Heart left ventricle (tissue), 16 donors: ENCODE measurements at regions of chr7 and their contacts with region 1.

Region 1: GRCh38 chr7:143126140-143126539 is 5.7 kb upstream of the PIP start:
- DNase-seq: no peak
- ATAC-seq: peak in 2 of 4 donors; percentile 22 to 39
- H3K4me3 ChIP-seq: no peak overlapping the region
- H3K27ac ChIP-seq: no peak overlapping the region
- H3K4me1 ChIP-seq: peaks cover 0 to 14% (median 0%) of the 10 kb centered on the region in 12 donors
- H3K27me3 ChIP-seq: no peaks in the 10 kb centered on the region
- CTCF ChIP-seq: no peak
- POLR2A ChIP-seq: no peak

Region 2: DNA sequence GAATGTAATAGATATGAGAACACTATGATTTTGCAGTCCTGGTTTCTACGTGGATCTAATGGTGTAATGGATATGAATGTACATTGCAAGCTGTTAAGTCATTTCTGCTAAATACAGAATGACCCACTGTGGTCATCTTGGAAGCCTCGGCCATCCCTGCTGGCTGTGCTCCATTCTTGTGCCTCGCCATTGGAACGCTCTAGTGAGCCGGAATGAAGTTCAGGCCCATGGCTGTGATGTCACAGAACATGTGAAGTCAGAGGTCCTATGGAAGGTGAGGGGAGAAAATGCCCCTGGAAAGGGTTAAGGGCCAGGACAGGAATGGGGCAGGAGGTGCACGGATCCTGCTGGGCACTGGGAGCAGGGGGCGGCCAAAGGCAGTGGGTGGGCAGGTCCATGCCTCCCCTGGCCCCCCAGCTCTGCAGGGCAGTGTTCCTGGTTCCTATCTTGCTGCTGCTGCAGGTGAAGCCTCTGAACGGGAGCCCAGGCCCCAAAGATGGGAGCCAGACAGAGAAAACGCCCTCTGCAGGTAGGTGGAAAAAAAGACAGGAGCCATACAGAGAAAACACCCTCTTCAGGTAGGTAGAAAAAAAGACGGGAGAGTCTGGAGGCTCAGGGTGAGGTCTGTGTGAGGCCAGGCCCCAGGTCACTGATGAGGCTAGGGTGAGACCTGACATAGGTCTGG is 186.8 kb before region 1 on chr7 and contains the start of gene LLCFC1:
- intact Hi-C with region 1: no loop called
- DNase-seq: no peak
- ATAC-seq: no peak
- H3K4me3 ChIP-seq: no peak within 1 kb of the TSS
- H3K27ac ChIP-seq: no peak within 1 kb of the TSS
- H3K4me1 ChIP-seq: peaks cover 0 to 7% (median 0%) of the 10 kb centered on the region in 12 donors
- H3K27me3 ChIP-seq: no peaks in the 10 kb centered on the region
- CTCF ChIP-seq: no peak
- POLR2A ChIP-seq: no peak
- total RNA-seq, gene LLCFC1: not detected

Region 3: DNA sequence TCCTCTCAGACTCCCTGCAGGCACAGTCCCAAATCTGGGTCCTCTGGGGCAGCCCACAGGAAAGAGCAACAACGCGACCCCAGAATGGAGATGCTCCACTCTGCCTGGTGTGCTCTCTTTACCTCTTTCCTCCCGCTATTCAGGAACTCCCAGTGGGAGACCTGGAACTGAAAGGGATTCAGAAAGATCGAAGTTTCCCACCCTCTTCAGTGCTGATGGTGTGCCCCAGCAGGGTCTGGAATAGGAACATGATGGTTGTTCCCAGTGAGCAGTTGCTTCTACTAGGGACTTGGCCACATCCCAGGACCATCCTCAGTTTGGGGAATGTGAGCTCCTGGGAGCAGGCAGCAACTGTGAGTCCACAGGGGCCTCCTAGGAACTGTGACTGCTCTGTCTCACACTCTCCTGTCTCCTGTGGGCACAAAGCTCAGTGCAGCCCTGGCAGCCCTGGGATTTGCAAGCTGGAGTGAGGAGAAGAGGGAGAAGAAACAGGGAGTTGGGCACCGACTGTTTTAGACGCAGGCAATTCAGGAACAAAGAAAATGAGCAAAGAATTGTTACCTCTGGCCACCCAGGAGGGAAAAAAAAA is 56.1 kb before region 1 on chr7:
- intact Hi-C with region 1: loop called in 1 of 10 experiments (anchors 10 kb)
- DNase-seq: no peak
- ATAC-seq: peak in 1 of 4 donors; percentile 28
- H3K4me3 ChIP-seq: no peak overlapping the region
- H3K27ac ChIP-seq: no peak overlapping the region
- H3K4me1 ChIP-seq: no peaks in the 10 kb centered on the region
- H3K27me3 ChIP-seq: no peaks in the 10 kb centered on the region
- CTCF ChIP-seq: no peak
- POLR2A ChIP-seq: no peak

Region 4: DNA sequence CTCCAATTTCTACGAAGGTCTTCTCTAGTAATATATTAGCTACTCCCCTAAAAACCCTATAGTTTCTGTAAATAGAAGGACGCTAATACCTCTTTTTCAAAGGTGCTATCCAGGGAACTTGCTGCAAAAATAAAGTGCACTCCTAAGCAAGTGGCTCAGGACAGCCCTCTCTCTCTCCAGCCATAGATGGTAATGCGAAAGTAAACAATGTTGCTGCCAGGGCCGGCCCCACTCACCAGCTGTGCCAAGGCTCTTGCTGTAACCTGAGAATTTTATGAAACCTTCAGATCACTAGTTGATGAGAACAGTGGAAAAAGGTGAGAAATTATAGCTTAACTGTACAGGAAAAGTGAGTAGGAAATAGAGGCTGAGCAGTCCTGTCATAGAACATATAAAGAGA is 46.2 kb after region 1 on chr7:
- intact Hi-C with region 1: loop called in 1 of 10 experiments (anchors 10 kb)
- DNase-seq: no peak
- ATAC-seq: no peak
- H3K4me3 ChIP-seq: no peak overlapping the region
- H3K27ac ChIP-seq: no peak overlapping the region
- H3K4me1 ChIP-seq: no peaks in the 10 kb centered on the region
- H3K27me3 ChIP-seq: no peaks in the 10 kb centered on the region
- CTCF ChIP-seq: no peak
- POLR2A ChIP-seq: no peak